ENCODE measurements at regions of chrX and their contacts with region 1.

Region 1: GRCh38 chrX:14029425-14030173 is at the start of gene GEMIN8:
- DNase-seq: peak; percentile 91
- H3K4me3 ChIP-seq: peak within 1 kb of the TSS; percentile 29 to 77 (median 64)
- H3K27ac ChIP-seq: peak within 1 kb of the TSS; percentile 85 to 92 (median 88)
- H3K4me1 ChIP-seq: peaks cover 0 to 11% (median 2%) of the 10 kb centered on the region in 4 donors
- H3K27me3 ChIP-seq: no peaks in the 10 kb centered on the region
- CTCF ChIP-seq: no peak
- EP300 ChIP-seq: no peak
- POLR2A ChIP-seq: peak; percentile 83
- total RNA-seq, gene GEMIN8: 8.6 to 22.1 (median 12.6) TPM

Region 2: GRCh38 chrX:12901486-12901885 is 1128.1 kb before region 1 on chrX:
- in situ Hi-C with region 1: loop called in 1 of 4 experiments (anchors 25 kb)
- intact Hi-C with region 1: no loop called
- DNase-seq: peak; percentile 74
- H3K4me3 ChIP-seq: no peak overlapping the region
- H3K27ac ChIP-seq: no peak overlapping the region
- H3K4me1 ChIP-seq: no peaks in the 10 kb centered on the region
- H3K27me3 ChIP-seq: no peaks in the 10 kb centered on the region
- CTCF ChIP-seq: peak; percentile 47 to 65 (median 55)
- EP300 ChIP-seq: no peak
- POLR2A ChIP-seq: no peak

Region 3: DNA sequence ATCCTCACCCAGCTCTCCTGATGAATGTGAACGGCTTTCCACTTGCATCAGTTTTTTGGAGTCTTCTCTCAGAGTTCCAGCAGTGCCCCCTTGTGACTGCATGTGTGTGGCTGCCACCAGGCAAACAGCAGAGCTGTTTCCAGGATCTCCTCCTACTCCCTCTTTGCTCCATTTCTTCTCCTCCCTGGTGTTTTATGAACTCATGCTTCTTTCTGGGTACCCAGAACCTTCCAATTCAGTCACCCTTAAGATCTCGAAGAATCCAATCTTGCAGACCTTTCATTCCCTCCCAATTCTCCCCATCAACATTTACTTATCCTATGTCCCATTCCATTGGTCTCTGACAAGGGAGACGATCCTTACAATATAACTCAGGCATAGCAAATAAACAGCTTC is 383.4 kb before region 1 on chrX:
- in situ Hi-C with region 1: loop called in 3 of 4 experiments (anchors 5 to 25 kb)
- intact Hi-C with region 1: loop called (anchors 10 kb)
- DNase-seq: peak; percentile 66
- H3K4me3 ChIP-seq: no peak overlapping the region
- H3K27ac ChIP-seq: no peak overlapping the region
- H3K4me1 ChIP-seq: no peaks in the 10 kb centered on the region
- H3K27me3 ChIP-seq: no peaks in the 10 kb centered on the region
- CTCF ChIP-seq: peak; percentile 37 to 63 (median 46)
- EP300 ChIP-seq: no peak
- POLR2A ChIP-seq: no peak

Region 4: GRCh38 chrX:13669246-13669737 is 360.3 kb before region 1 on chrX:
- in situ Hi-C with region 1: loop called in 2 of 4 experiments (anchors 10 to 25 kb)
- intact Hi-C with region 1: no loop called
- DNase-seq: peak; percentile 82
- H3K4me3 ChIP-seq: peak overlapping the region in 1 of 4 donors; percentile 1
- H3K27ac ChIP-seq: peak overlapping the region; percentile 62 to 81 (median 72)
- H3K4me1 ChIP-seq: peaks cover 4 to 15% (median 7%) of the 10 kb centered on the region in 4 donors
- H3K27me3 ChIP-seq: no peaks in the 10 kb centered on the region
- CTCF ChIP-seq: no peak
- EP300 ChIP-seq: peak; percentile 12
- POLR2A ChIP-seq: no peak

Region 5: GRCh38 chrX:13750204-13750603 is 279.4 kb before region 1 on chrX:
- in situ Hi-C with region 1: loop called (anchors 10 to 25 kb)
- intact Hi-C with region 1: loop called (anchors 10 kb)
- DNase-seq: no peak
- H3K4me3 ChIP-seq: no peak overlapping the region
- H3K27ac ChIP-seq: no peak overlapping the region
- H3K4me1 ChIP-seq: no peaks in the 10 kb centered on the region
- H3K27me3 ChIP-seq: no peaks in the 10 kb centered on the region
- CTCF ChIP-seq: peak; percentile 37 to 46 (median 43)
- EP300 ChIP-seq: no peak
- POLR2A ChIP-seq: no peak

Measured in transverse colon (tissue), 4 donors.